Activated naive CD4-positive, alpha-beta T cell treated with anti-CD3 and anti-CD28 coated beads for 36 hours (primary cell): ENCODE measurements at regions of chr3 and their contacts with region 1.

Region 1: GRCh38 chr3:4493014-4493940 is at the start of gene ITPR1:
- DNase-seq: peak; percentile 98
- H3K4me3 Mint-ChIP-seq: peak within 1 kb of the TSS; percentile 87
- H3K27ac Mint-ChIP-seq: peak within 1 kb of the TSS; percentile 83
- H3K4me1 Mint-ChIP-seq: peaks cover 37% of the 10 kb centered on the region
- H3K27me3 Mint-ChIP-seq: peaks cover 4% of the 10 kb centered on the region
- total RNA-seq, gene ITPR1: 38.5 to 41.1 TPM

Region 2: GRCh38 chr3:4303187-4304123 is 189.8 kb before region 1 on chr3 and contains the start of gene SETMAR:
- CTCF ChIA-PET with region 1: no interaction called
- intact Hi-C with region 1: loop called (anchors 1 kb)
- DNase-seq: peak; percentile 92
- H3K4me3 Mint-ChIP-seq: peak within 1 kb of the TSS; percentile 89
- H3K27ac Mint-ChIP-seq: peak within 1 kb of the TSS; percentile 98
- H3K4me1 Mint-ChIP-seq: peaks cover 27% of the 10 kb centered on the region
- H3K27me3 Mint-ChIP-seq: no peaks in the 10 kb centered on the region
- total RNA-seq, gene SETMAR: 11.6 to 12.6 TPM

Region 3: GRCh38 chr3:4421121-4421520 is 72.2 kb before region 1 on chr3:
- CTCF ChIA-PET with region 1: no interaction called
- intact Hi-C with region 1: loop called (anchors 1 kb)
- DNase-seq: peak; percentile 39
- H3K4me3 Mint-ChIP-seq: no peak overlapping the region
- H3K27ac Mint-ChIP-seq: no peak overlapping the region
- H3K4me1 Mint-ChIP-seq: peaks cover 19% of the 10 kb centered on the region
- H3K27me3 Mint-ChIP-seq: no peaks in the 10 kb centered on the region

Region 4: GRCh38 chr3:4512895-4513616 is 19.8 kb after region 1 on chr3:
- CTCF ChIA-PET with region 1: interaction called, 17 read pairs
- intact Hi-C with region 1: no loop called
- DNase-seq: no peak
- H3K4me3 Mint-ChIP-seq: no peak overlapping the region
- H3K27ac Mint-ChIP-seq: no peak overlapping the region
- H3K4me1 Mint-ChIP-seq: peaks cover 23% of the 10 kb centered on the region
- H3K27me3 Mint-ChIP-seq: no peaks in the 10 kb centered on the region

Region 5: GRCh38 chr3:4633078-4634004 is 140.1 kb after region 1 on chr3:
- CTCF ChIA-PET with region 1: interaction called, 9 read pairs
- intact Hi-C with region 1: loop called (anchors 1 kb)
- DNase-seq: no peak
- H3K4me3 Mint-ChIP-seq: no peak overlapping the region
- H3K27ac Mint-ChIP-seq: no peak overlapping the region
- H3K4me1 Mint-ChIP-seq: peaks cover 3% of the 10 kb centered on the region
- H3K27me3 Mint-ChIP-seq: no peaks in the 10 kb centered on the region

Region 6: DNA sequence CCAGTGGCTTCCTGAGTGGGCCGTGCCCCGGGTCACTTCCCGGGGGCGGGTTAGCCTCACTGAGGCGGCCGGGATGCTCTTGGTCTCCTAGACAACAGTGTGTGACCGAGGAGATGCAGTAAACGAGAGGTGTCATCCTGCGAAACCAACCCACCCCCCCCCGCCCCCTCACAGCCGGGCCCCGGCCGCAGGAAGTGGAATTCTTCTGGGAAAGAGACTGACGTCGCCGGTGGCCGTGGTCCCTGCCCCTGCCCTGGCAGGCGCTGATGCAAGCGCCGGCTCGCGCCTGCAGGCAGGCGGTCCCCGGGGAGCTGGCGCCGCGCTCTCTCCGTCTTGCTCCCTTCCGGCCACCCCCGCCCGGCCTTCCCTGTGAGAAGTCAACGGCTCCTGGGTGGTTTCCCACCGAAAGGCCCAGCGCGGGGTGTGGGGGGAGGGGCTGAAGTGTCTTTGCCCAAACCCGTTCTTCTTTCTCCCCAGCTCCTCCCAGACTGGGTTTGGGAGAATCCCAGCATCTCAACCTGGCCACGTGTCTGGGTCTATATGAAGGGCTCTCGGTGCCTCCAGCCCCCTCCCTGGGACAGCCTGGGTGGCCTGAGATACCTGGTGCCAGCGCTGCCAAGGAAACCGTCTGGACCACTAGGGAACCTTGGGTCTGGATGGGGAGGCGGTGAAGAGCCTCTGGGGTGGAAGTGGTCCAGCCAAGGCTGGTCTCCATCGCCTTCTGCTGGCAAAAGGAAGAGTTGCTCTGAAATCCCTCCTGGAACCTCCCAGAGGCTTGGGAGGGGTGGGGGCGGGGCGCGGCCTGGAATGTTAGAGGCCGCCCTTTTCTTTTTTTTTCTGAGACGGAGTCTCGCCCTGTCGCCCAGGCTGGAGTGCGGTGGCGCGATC is 533.3 kb after region 1 on chr3:
- CTCF ChIA-PET with region 1: interaction called, 3 read pairs
- intact Hi-C with region 1: loop called (anchors 1 kb)
- DNase-seq: peak; percentile 86
- H3K4me3 Mint-ChIP-seq: peak overlapping the region; percentile 74
- H3K27ac Mint-ChIP-seq: peak overlapping the region; percentile 80
- H3K4me1 Mint-ChIP-seq: peaks cover 38% of the 10 kb centered on the region
- H3K27me3 Mint-ChIP-seq: no peaks in the 10 kb centered on the region